ENCODE measurements at regions of chr19 and their contacts with region 1.

Region 1: GRCh38 chr19:16566161-16566560 is 6.1 kb downstream of the SLC35E1 start:
- DNase-seq: peak; percentile 72 to 96 (median 82)
- ATAC-seq: peak; percentile 97
- H3K4me3 ChIP-seq: no peak overlapping the region
- H3K4me3 Mint-ChIP-seq: peak overlapping the region; percentile 73
- H3K27ac ChIP-seq: peak overlapping the region; percentile 49 to 66
- H3K27ac Mint-ChIP-seq: peak overlapping the region; percentile 99
- H3K4me1 ChIP-seq: peaks cover 21% of the 10 kb centered on the region
- H3K4me1 Mint-ChIP-seq: peaks cover 31% of the 10 kb centered on the region
- H3K27me3 ChIP-seq: no peaks in the 10 kb centered on the region
- H3K27me3 Mint-ChIP-seq: no peaks in the 10 kb centered on the region
- CTCF ChIP-seq: no peak

Region 2: GRCh38 chr19:16584248-16585141 is 18.3 kb after region 1 on chr19:
- CTCF ChIA-PET with region 1: interaction called, 4 read pairs
- POLR2A ChIA-PET with region 1: interaction called, 6 read pairs
- intact Hi-C with region 1: loop called (anchors 1 to 2 kb)
- DNase-seq: peak; percentile 77 to 99 (median 90)
- ATAC-seq: peak; percentile 80
- H3K4me3 ChIP-seq: peak overlapping the region; percentile 23 to 30
- H3K4me3 Mint-ChIP-seq: peak overlapping the region; percentile 70
- H3K27ac ChIP-seq: peak overlapping the region; percentile 18 to 84
- H3K27ac Mint-ChIP-seq: peak overlapping the region; percentile 94
- H3K4me1 ChIP-seq: peaks cover 76% of the 10 kb centered on the region
- H3K4me1 Mint-ChIP-seq: peaks cover 79% of the 10 kb centered on the region
- H3K27me3 ChIP-seq: no peaks in the 10 kb centered on the region
- H3K27me3 Mint-ChIP-seq: no peaks in the 10 kb centered on the region
- CTCF ChIP-seq: no peak

Measured in CD8-positive, alpha-beta T cell (primary cell).